Posterior vena cava (tissue), 2 donors: ENCODE measurements at regions of chrX and their contacts with region 1.

Region 1: DNA sequence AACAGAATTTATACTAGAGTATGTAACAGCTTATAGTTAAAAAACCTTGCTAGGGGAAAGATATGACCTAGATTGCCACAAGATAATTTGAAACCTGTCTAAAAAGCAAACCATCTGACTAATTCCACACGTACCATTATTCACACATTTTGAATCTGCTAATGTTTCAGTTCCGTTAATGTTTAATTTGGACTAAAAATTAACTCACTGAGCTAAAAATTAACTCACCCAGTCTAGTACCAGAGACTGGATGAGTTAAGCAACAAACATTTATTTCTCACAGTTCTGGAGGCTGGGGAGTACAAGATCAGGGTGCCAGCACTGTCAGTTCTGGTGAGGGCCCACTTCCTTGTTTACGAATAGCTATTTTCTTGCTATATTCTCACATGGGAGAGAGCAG is 231.5 kb upstream of the DIAPH2 start:
- DNase-seq: no peak

Region 2: DNA sequence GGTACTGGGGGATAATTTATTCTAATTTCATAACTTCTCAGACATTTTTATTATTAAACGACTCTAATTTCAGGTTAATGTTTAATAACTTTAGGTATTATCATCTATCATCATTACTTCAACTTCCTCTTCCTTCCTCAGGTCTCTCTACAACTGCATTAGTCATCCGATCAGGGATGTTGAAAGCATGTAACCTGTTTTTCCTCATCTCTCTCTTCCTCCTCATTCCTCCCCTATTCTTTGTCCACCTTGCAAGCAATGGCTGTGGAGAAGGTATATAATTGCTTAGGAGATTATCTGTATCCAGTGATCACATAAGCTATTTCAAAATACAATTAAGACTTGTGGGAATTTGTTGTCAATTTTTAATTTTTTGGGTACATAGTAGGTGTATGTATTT is 401.1 kb before region 1 on chrX:
- intact Hi-C with region 1: no loop called
- DNase-seq: no peak

Region 3: DNA sequence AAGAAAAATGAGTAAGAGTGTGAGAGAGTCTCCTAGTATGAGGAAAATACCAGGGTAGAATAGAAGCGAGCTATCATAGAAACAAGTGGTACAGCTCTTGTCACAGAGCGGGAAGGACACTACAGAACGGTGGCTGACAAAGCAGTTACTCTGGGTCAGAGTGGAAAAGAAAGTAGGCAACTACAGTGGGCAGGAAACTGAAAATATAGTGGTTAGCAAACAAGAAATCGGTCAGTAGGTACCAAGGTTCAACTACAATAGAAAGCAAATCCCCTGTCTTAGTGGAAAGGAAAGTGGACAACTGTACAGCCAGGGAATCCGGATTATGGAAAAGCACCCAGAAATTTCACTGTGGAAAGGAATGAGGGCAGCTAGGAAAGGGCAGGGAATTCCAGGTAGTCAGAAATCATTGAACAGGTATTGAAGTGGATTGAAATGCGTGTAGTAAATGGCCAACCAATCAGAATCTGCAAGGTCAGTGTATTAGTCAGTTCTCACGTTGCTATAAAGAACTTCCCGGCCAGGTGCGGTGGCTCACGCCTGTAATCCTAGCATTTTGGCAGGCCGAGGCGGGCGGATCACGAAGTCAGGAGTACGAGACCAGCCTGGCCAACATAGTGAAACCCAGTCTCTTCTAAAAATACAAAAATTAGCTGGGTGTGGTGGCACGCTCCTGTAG is 11.9 kb after region 1 on chrX:
- intact Hi-C with region 1: no loop called
- DNase-seq: no peak

Region 4: DNA sequence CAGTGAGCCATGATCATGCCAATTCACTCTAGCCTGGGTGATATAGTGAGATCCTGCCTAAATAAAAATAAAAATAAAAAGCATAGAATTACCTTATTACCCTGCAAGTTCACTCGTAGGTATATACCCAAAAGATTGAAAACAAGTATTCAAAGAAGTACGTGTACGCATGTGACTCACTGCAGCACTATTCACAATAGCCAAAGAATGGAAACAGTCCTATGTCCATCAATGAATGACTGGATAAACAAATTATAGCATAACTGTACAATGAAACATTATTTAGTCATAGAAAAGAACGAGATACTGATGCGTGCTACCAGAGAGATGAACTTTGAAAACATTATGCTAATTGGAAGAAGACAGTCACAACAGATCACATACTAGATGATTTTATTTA is 26.9 kb after region 1 on chrX:
- intact Hi-C with region 1: loop called in 1 of 2 experiments (anchors 1 kb)
- DNase-seq: no peak